Transverse colon (tissue), 4 donors: ENCODE measurements at regions of chr9 and their contacts with region 1.

Region 1: GRCh38 chr9:84007662-84008061 is 27.1 kb downstream of the RMI1 start:
- DNase-seq: no peak
- H3K4me3 ChIP-seq: no peak overlapping the region
- H3K27ac ChIP-seq: no peak overlapping the region
- H3K4me1 ChIP-seq: peaks cover 0 to 1% (median 0%) of the 10 kb centered on the region in 4 donors
- H3K27me3 ChIP-seq: no peaks in the 10 kb centered on the region
- CTCF ChIP-seq: no peak
- EP300 ChIP-seq: no peak
- POLR2A ChIP-seq: no peak

Region 2: DNA sequence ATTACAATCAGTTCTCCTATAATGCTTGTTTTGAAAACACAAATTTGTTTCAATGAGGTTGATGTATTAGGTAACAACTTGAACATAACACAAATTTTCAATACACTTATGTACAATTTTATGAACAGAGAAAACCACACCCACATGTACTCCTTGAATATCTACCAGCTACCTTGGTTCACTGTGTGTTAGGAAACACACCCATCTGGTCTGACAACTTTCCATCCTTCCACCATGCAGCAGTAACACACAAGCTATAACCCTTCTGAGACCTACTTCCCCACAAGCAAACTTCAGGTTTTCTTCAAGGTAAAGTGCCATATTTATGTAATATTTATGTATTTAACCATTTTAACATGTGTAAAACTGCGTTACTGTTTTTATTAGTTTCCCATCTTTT is 263.4 kb before region 1 on chr9:
- in situ Hi-C with region 1: no loop called
- intact Hi-C with region 1: no loop called
- DNase-seq: no peak
- H3K4me3 ChIP-seq: no peak overlapping the region
- H3K27ac ChIP-seq: no peak overlapping the region
- H3K4me1 ChIP-seq: no peaks in the 10 kb centered on the region
- H3K27me3 ChIP-seq: no peaks in the 10 kb centered on the region
- CTCF ChIP-seq: no peak
- EP300 ChIP-seq: no peak
- POLR2A ChIP-seq: no peak

Region 3: GRCh38 chr9:84027201-84027600 is 19.5 kb after region 1 on chr9:
- in situ Hi-C with region 1: no loop called
- intact Hi-C with region 1: loop called (anchors 1 kb)
- DNase-seq: no peak
- H3K4me3 ChIP-seq: no peak overlapping the region
- H3K27ac ChIP-seq: no peak overlapping the region
- H3K4me1 ChIP-seq: no peaks in the 10 kb centered on the region
- H3K27me3 ChIP-seq: no peaks in the 10 kb centered on the region
- CTCF ChIP-seq: no peak
- EP300 ChIP-seq: no peak
- POLR2A ChIP-seq: no peak

Region 4: DNA sequence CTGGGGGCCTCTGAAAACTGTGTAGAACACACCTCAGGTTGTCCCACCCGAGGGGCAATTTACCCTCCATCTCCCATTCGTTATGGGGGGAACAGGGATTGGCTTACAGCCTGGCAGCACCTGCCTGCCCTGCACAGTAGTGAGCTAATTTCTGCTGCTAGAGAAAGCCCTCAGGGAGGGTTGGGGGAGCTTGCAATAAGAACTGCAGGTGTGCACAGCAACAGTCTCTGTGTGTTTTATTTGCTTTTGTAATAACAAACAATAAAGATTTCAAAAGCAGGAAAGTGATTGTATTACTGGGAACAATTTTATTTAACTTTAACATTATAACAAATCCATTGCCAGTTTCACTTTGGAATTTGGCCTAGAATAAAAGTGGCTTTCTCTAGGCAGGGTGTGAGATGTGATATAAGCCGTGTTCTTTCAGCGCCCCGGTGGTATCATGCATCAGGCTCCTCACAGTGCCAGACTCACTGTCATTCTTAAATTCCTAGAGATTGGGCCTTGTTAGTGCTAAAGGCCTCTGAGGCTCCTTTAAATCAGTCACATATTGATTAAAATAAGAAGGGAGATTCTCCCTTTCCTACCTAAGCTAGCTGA is 54.0 kb after region 1 on chr9:
- in situ Hi-C with region 1: no loop called
- intact Hi-C with region 1: no loop called
- DNase-seq: peak; percentile 17
- H3K4me3 ChIP-seq: no peak overlapping the region
- H3K27ac ChIP-seq: peak overlapping the region in 3 of 4 donors; percentile 20 to 56 (median 37)
- H3K4me1 ChIP-seq: peaks cover 0 to 15% (median 3%) of the 10 kb centered on the region in 4 donors
- H3K27me3 ChIP-seq: no peaks in the 10 kb centered on the region
- CTCF ChIP-seq: no peak
- EP300 ChIP-seq: no peak
- POLR2A ChIP-seq: no peak

Region 5: GRCh38 chr9:84642553-84643141 is 635.0 kb after region 1 on chr9:
- in situ Hi-C with region 1: no loop called
- intact Hi-C with region 1: no loop called
- DNase-seq: no peak
- H3K4me3 ChIP-seq: no peak overlapping the region
- H3K27ac ChIP-seq: no peak overlapping the region
- H3K4me1 ChIP-seq: no peaks in the 10 kb centered on the region
- H3K27me3 ChIP-seq: no peaks in the 10 kb centered on the region
- CTCF ChIP-seq: no peak
- EP300 ChIP-seq: no peak
- POLR2A ChIP-seq: no peak